AG04449 (cell line): ENCODE measurements at regions of chr10 and their contacts with region 1.

Region 1: DNA sequence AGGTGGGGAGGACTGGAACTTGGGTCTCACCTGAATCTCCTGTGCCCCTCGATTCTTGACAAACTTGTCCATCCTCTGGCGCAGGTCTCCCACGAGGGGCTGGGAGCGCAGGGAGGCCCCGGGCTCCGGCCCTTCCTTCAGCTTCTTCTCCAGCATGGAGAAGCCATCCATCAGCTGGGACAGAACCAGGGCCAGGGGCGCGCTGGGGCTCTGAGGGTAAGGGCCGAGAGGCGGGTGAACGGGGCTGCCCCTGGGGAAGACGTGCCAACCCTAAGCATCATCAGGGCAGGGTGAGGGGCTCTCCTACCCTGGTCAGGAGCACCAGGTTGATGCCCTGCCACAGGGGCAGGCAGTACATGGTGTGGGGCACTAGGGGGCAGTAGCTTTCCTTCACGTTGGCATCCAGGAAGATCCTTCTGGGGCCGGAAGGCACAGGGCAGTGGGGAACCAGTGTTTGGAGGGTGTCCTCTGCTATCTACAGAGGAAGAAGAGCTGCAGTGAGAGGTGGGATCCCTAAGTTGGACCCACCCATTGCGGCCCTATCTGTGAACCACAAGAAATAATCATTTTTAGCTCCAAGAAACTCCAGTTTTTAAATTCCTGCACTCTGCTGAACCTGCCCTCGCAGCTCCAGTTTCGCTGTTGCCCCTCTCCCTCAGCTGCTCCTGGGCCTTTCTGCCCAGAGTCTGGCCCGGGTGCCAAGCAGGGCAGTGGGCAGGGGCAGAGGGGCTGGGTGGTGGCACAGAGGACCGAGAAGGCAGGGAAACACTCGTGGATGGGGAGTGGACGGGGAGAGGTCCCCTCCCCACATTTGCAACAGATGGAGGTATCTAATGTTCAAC is 10.8 kb upstream of the PYROXD2 start:
- DNase-seq: no peak
- H3K4me3 ChIP-seq: no peak overlapping the region
- CTCF ChIP-seq: peak; percentile 70

Region 2: DNA sequence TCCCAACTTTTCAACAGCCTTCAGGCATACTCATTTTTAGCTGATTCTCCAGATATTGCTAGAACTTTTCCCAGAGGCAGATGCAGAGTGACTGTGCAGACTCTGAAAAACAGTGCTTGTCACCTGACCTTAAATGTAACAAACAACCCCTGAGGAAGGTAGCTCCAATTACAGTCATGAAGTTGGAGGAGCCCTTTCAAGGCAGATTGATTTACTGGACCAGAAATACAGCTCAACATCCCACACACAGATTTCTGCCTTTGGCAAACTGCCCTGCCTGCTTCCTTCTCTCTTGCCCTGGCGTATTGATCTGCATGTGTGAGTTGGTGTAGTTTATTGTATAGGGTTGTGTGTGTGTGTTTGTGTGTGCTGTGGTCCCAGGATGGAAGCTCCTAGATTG is 49.2 kb before region 1 on chr10:
- CTCF ChIA-PET with region 1: no interaction called
- POLR2A ChIA-PET with region 1: no interaction called
- DNase-seq: no peak
- H3K4me3 ChIP-seq: no peak overlapping the region
- CTCF ChIP-seq: no peak

Region 3: DNA sequence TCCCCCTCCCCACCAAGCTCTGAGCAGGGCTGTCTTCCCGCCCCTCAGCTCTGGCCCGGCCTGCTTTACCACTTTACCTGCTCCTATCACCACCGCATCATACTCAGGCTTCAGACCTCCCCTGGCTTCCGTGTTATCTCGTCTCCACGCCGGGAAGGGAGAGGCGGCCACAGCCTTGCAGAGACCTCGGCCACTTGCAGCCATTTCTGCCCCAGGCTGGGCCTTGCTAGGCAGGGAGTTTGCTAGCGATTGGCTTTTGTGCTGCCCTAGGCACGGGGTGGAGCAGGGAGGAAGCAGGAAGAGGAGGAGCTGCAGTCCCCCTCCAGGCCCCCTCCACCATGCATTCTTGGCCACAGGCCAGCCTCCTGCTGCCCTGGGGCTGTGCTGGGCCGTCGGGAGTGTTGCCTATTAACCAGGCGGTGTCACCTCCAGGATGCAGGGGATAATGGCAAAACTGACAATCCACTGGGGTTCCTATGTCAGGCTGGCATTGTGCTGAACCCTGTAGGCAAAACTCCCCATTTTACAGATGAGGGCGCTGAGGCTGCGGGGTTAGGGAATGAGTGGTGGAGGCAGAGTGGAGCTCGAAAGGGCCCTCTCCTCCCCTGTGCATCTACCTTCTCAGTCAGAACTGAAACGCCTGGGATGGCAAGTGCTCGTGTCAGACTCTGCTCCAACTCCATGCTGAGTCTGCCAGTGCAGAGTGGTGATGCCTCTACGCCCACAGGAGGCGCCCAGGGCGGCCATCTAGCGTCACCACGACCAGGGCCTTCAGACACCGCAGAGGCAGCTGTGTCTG is 10.6 kb before region 1 on chr10 and contains the start of gene PYROXD2:
- CTCF ChIA-PET with region 1: interaction called, 24 read pairs
- POLR2A ChIA-PET with region 1: interaction called, 4 read pairs
- DNase-seq: peak; percentile 64
- H3K4me3 ChIP-seq: peak within 1 kb of the TSS; percentile 86
- CTCF ChIP-seq: no peak

Region 4: DNA sequence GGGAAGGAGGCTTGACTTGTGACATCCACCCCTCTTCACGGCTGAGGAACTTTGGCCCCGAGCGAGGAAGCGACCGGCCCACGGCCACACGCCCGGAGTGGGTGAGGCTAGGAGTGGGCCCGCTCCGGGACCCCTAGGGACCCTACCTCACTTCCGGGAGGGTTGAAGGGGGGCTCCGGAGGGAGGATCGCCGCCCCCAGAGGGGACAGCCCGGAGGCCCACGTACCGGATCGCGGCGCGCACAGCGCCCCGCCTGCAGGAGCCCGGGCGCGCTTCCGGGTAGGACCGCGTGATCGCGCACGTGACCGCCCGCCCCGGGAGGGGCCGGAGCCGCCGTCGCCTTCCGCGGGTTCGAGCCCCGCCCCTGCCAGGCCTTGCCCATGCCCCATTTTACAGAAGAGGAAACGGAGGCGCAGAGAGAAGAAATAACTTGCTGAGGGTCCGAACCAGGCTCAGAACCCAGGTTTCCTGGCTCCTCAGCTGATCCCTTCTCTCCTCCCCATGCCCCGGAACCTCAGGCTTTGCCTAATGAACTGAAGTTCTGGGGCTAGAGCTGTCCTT is 21.0 kb after region 1 on chr10 and contains the start of gene HPS1:
- CTCF ChIA-PET with region 1: interaction called, 18 read pairs
- POLR2A ChIA-PET with region 1: no interaction called
- DNase-seq: no peak
- H3K4me3 ChIP-seq: peak within 1 kb of the TSS; percentile 82
- CTCF ChIP-seq: peak; percentile 9